Activated B cell treated with CpG ODN at 0.5 μM for 24 hours (primary cell): ENCODE measurements at regions of chr5 and their contacts with region 1.

Region 1: GRCh38 chr5:160342403-160342941 is 28.0 kb downstream of the C1QTNF2 start:
- DNase-seq: no peak
- ATAC-seq: no peak
- H3K4me3 Mint-ChIP-seq: no peak overlapping the region
- H3K27ac Mint-ChIP-seq: no peak overlapping the region
- H3K4me1 Mint-ChIP-seq: no peaks in the 10 kb centered on the region
- H3K27me3 Mint-ChIP-seq: no peaks in the 10 kb centered on the region
- CTCF ChIP-seq: no peak

Region 2: DNA sequence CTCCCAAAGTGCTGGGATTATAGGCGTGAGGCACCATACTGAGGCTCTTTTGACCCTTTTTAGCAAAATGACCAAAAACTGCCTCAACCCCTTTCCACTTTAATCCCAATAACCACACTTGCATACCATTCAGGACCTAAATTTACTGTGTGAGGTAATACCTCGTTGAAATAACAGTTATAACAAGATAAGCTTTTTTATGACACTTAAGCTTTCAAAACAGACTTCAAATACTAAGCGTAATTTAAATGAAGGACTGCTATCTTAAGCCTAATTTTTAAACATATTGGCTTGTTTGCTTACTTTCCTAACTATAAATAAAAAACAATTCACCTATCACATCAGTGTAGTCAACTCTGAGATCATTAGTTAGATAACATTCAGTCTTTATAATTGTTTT is 261.0 kb before region 1 on chr5:
- CTCF ChIA-PET with region 1: interaction called, 22 read pairs
- POLR2A ChIA-PET with region 1: interaction called, 4 read pairs
- intact Hi-C with region 1: loop called (anchors 1 kb)
- DNase-seq: no peak
- ATAC-seq: no peak
- H3K4me3 Mint-ChIP-seq: no peak overlapping the region
- H3K27ac Mint-ChIP-seq: no peak overlapping the region
- H3K4me1 Mint-ChIP-seq: peaks cover 2% of the 10 kb centered on the region
- H3K27me3 Mint-ChIP-seq: no peaks in the 10 kb centered on the region
- CTCF ChIP-seq: no peak

Region 3: GRCh38 chr5:160199410-160199911 is 143.0 kb before region 1 on chr5:
- CTCF ChIA-PET with region 1: interaction called, 23 read pairs
- POLR2A ChIA-PET with region 1: no interaction called
- intact Hi-C with region 1: loop called (anchors 1 kb)
- DNase-seq: peak; percentile 78
- ATAC-seq: peak; percentile 96
- H3K4me3 Mint-ChIP-seq: peak overlapping the region; percentile 68
- H3K27ac Mint-ChIP-seq: no peak overlapping the region
- H3K4me1 Mint-ChIP-seq: peaks cover 6% of the 10 kb centered on the region
- H3K27me3 Mint-ChIP-seq: peaks cover 32% of the 10 kb centered on the region
- CTCF ChIP-seq: peak; percentile 55

Region 4: DNA sequence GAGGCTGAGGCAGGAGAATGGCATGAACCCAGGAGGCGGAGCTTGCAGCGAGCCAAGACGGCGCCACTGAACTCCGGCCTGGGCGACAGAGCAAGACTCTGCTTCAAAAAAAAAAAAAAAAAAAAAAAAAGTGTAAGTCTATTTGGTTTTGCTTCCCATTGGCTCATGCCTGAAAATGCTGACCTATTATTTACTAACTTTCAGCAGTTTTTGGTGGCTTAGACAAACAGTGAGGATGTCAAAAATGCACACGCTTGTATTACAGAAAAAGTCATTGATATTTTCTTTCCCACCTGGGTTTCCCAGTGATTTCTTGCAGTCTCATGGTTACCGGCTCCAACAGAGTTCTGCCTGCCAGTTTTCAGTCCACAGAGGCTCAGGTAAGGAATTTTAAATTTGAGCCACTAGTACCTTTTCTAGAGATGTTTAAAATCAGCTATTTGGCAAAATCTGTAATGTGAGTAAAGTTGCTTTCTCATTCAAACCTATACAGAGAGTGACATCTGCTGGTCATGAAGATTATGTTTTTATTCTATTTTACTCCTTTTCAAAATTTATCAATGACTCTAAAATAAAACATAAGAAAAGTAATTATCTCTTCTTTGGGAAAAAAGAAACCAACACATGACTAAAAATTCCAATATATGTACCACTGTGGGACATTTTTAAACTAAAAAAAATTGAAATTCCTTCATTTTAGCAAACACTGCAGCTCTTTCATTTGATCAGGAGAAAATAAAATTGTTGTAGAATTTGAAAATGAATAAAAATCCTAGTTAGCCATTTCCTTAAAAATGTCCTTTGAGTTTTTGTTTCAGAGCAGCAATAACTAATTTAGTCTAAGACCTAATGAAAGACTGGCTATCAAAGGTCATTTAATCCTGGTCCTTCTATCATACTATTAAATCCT is 48.6 kb after region 1 on chr5:
- CTCF ChIA-PET with region 1: interaction called, 3 read pairs
- POLR2A ChIA-PET with region 1: no interaction called
- intact Hi-C with region 1: loop called (anchors 1 kb)
- DNase-seq: no peak
- ATAC-seq: no peak
- H3K4me3 Mint-ChIP-seq: no peak overlapping the region
- H3K27ac Mint-ChIP-seq: no peak overlapping the region
- H3K4me1 Mint-ChIP-seq: no peaks in the 10 kb centered on the region
- H3K27me3 Mint-ChIP-seq: no peaks in the 10 kb centered on the region
- CTCF ChIP-seq: no peak

Region 5: GRCh38 chr5:160458806-160459800 is 116.6 kb after region 1 on chr5:
- CTCF ChIA-PET with region 1: no interaction called
- POLR2A ChIA-PET with region 1: no interaction called
- intact Hi-C with region 1: no loop called
- DNase-seq: no peak
- ATAC-seq: peak; percentile 78
- H3K4me3 Mint-ChIP-seq: peak overlapping the region; percentile 39
- H3K27ac Mint-ChIP-seq: peak overlapping the region; percentile 51
- H3K4me1 Mint-ChIP-seq: peaks cover 45% of the 10 kb centered on the region
- H3K27me3 Mint-ChIP-seq: peaks cover 1% of the 10 kb centered on the region
- CTCF ChIP-seq: no peak